HAP-1 (cell line): ENCODE measurements at regions of chr4 and their contacts with region 1.

Region 1: DNA sequence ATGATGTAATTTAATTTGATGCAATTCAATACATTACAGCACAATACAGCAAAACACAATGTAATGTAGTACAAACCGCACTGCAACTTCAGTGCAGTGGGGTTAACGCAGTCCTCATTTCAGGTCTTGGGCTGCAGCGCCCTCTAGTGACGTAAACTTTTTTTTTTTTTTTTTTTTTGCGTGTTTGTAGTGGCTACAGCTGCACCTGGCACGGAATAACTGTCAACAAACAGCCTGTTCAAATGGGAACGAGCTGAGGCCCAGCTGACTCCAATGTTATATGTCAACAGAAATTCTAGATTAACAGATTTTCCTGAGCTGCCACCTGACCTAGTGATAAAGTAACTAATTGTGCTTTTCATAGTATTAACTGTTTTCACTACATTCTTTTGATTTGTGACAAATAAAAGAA is 33.5 kb upstream of the RASSF6 start:
- DNase-seq: peak; percentile 7 to 11
- H3K4me3 ChIP-seq: no peak overlapping the region
- H3K4me1 ChIP-seq: no peaks in the 10 kb centered on the region
- H3K27me3 ChIP-seq: peaks cover 2% of the 10 kb centered on the region; the same call in 1 of the 2 replicates

Region 2: GRCh38 chr4:72919937-72920336 is 733.8 kb before region 1 on chr4:
- in situ Hi-C with region 1: no loop called
- DNase-seq: no peak
- H3K4me3 ChIP-seq: no peak overlapping the region
- H3K4me1 ChIP-seq: no peaks in the 10 kb centered on the region
- H3K27me3 ChIP-seq: no peaks in the 10 kb centered on the region

Region 3: DNA sequence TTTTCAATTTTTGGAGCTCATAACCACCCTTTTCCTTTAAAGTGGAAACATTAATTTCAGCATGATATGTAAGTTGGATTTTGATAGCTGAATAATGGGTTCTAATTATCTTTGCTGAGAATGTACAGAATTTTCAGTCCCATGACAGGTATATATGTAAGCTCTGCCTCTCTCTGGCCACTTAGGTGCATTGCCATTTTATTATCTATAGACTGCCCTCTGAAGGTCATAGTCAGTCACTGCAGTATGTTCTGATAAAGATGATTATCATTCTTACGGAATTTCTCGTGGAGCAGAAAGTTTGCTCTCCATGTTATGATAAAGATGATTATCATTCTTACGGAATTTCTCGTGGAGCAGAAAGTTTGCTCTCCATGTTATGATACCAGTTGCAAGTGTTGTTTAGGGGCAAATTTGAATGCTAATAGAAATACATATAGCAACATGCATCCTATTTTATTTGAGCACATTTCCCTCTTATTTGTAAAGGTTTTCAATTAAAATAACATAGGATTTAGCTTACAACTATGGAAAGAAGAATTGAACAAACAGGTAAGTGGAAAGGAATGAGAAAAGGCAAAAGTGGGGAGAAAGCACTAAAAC is 207.3 kb before region 1 on chr4:
- in situ Hi-C with region 1: loop called (anchors 25 kb)
- DNase-seq: peak; percentile 40 to 82
- H3K4me3 ChIP-seq: no peak overlapping the region
- H3K4me1 ChIP-seq: no peaks in the 10 kb centered on the region
- H3K27me3 ChIP-seq: no peaks in the 10 kb centered on the region